CD8-positive, alpha-beta T cell (primary cell): ENCODE measurements at regions of chr14 and their contacts with region 1.

Region 1: GRCh38 chr14:91177073-91178034 is 63.5 kb downstream of the DGLUCY start:
- DNase-seq: peak; percentile 37 to 88 (median 64)
- ATAC-seq: peak; percentile 93
- H3K4me3 ChIP-seq: no peak overlapping the region
- H3K4me3 Mint-ChIP-seq: no peak overlapping the region
- H3K27ac ChIP-seq: peak overlapping the region in 1 of 2 experiments; percentile 52
- H3K27ac Mint-ChIP-seq: peak overlapping the region; percentile 89
- H3K4me1 ChIP-seq: peaks cover 5% of the 10 kb centered on the region
- H3K4me1 Mint-ChIP-seq: peaks cover 12% of the 10 kb centered on the region
- H3K27me3 ChIP-seq: no peaks in the 10 kb centered on the region
- H3K27me3 Mint-ChIP-seq: no peaks in the 10 kb centered on the region
- CTCF ChIP-seq: peak; percentile 89

Region 2: GRCh38 chr14:90985601-90986242 is 191.6 kb before region 1 on chr14:
- CTCF ChIA-PET with region 1: interaction called, 9 read pairs
- POLR2A ChIA-PET with region 1: no interaction called
- intact Hi-C with region 1: loop called in 1 of 2 experiments (anchors 10 kb)
- DNase-seq: no peak
- ATAC-seq: no peak
- H3K4me3 ChIP-seq: no peak overlapping the region
- H3K4me3 Mint-ChIP-seq: no peak overlapping the region
- H3K27ac ChIP-seq: no peak overlapping the region
- H3K27ac Mint-ChIP-seq: no peak overlapping the region
- H3K4me1 ChIP-seq: no peaks in the 10 kb centered on the region
- H3K4me1 Mint-ChIP-seq: peaks cover 3% of the 10 kb centered on the region
- H3K27me3 ChIP-seq: no peaks in the 10 kb centered on the region
- H3K27me3 Mint-ChIP-seq: no peaks in the 10 kb centered on the region
- CTCF ChIP-seq: no peak

Region 3: DNA sequence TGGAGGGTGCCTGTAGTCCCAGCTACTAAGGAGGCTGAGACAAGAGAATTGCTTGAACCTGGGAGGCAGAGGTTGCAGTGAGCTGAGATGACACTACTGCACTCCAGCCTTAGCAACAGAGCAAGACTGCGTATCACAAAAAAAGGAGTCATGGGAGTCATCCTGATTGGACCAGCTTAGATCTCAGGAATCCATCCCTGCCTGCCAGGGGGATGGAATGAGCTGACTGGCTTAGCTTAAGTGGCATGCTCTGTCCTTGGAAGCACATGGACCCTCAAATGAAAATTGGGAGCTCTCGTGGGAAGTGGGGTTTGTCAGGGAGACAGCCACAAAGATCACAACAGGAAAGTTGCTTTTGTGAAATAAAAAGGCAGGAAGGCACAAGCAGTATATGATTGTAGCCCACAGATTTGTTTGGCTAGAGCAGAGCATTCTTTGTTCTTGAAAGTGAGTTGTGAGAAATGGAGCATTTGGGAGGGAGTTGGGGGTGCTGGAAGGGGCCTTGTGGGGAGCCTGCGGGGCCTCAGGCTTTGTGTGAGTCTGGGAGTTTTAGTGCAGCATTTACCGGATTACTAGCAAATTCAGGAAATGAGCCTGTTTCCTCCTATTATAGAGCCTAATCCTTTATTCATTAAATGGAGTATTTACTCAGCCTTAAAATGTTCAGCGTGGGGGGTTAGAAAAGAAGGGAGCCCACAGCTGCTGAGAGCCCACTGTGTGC is 32.8 kb before region 1 on chr14:
- CTCF ChIA-PET with region 1: interaction called, 14 read pairs
- POLR2A ChIA-PET with region 1: no interaction called
- intact Hi-C with region 1: no loop called
- DNase-seq: no peak
- ATAC-seq: no peak
- H3K4me3 ChIP-seq: no peak overlapping the region
- H3K4me3 Mint-ChIP-seq: no peak overlapping the region
- H3K27ac ChIP-seq: no peak overlapping the region
- H3K27ac Mint-ChIP-seq: peak overlapping the region; percentile 53
- H3K4me1 ChIP-seq: peaks cover 17% of the 10 kb centered on the region
- H3K4me1 Mint-ChIP-seq: peaks cover 27% of the 10 kb centered on the region
- H3K27me3 ChIP-seq: no peaks in the 10 kb centered on the region
- H3K27me3 Mint-ChIP-seq: no peaks in the 10 kb centered on the region
- CTCF ChIP-seq: no peak

Region 4: GRCh38 chr14:91228112-91229004 is 51.0 kb after region 1 on chr14:
- CTCF ChIA-PET with region 1: interaction called, 13 read pairs
- POLR2A ChIA-PET with region 1: interaction called, 3 read pairs
- intact Hi-C with region 1: no loop called
- DNase-seq: peak; percentile 36 to 96 (median 75)
- ATAC-seq: peak; percentile 77
- H3K4me3 ChIP-seq: no peak overlapping the region
- H3K4me3 Mint-ChIP-seq: peak overlapping the region; percentile 65
- H3K27ac ChIP-seq: peak overlapping the region; percentile 6 to 85
- H3K27ac Mint-ChIP-seq: peak overlapping the region; percentile 94
- H3K4me1 ChIP-seq: peaks cover 87% of the 10 kb centered on the region
- H3K4me1 Mint-ChIP-seq: peaks cover 89% of the 10 kb centered on the region
- H3K27me3 ChIP-seq: no peaks in the 10 kb centered on the region
- H3K27me3 Mint-ChIP-seq: no peaks in the 10 kb centered on the region
- CTCF ChIP-seq: no peak

Region 5: GRCh38 chr14:91264151-91265150 is 87.1 kb after region 1 on chr14:
- CTCF ChIA-PET with region 1: interaction called, 16 read pairs
- POLR2A ChIA-PET with region 1: no interaction called
- intact Hi-C with region 1: loop called in 1 of 2 experiments (anchors 5 kb)
- DNase-seq: peak in 5 of 9 experiments; percentile 21 to 67 (median 52)
- ATAC-seq: peak; percentile 45
- H3K4me3 ChIP-seq: peak overlapping the region in 1 of 2 experiments; percentile 28
- H3K4me3 Mint-ChIP-seq: peak overlapping the region; percentile 64
- H3K27ac ChIP-seq: no peak overlapping the region
- H3K27ac Mint-ChIP-seq: peak overlapping the region; percentile 32
- H3K4me1 ChIP-seq: peaks cover 19% of the 10 kb centered on the region
- H3K4me1 Mint-ChIP-seq: peaks cover 42% of the 10 kb centered on the region
- H3K27me3 ChIP-seq: no peaks in the 10 kb centered on the region
- H3K27me3 Mint-ChIP-seq: no peaks in the 10 kb centered on the region
- CTCF ChIP-seq: no peak

Region 6: GRCh38 chr14:91292491-91292890 is 115.1 kb after region 1 on chr14:
- CTCF ChIA-PET with region 1: interaction called, 400 read pairs
- POLR2A ChIA-PET with region 1: interaction called, 3 read pairs
- intact Hi-C with region 1: no loop called
- DNase-seq: peak in 1 of 9 experiments; percentile 49
- ATAC-seq: peak; percentile 41
- H3K4me3 ChIP-seq: no peak overlapping the region
- H3K4me3 Mint-ChIP-seq: no peak overlapping the region
- H3K27ac ChIP-seq: peak overlapping the region in 1 of 2 experiments; percentile 5
- H3K27ac Mint-ChIP-seq: peak overlapping the region; percentile 94
- H3K4me1 ChIP-seq: no peaks in the 10 kb centered on the region
- H3K4me1 Mint-ChIP-seq: peaks cover 13% of the 10 kb centered on the region
- H3K27me3 ChIP-seq: no peaks in the 10 kb centered on the region
- H3K27me3 Mint-ChIP-seq: no peaks in the 10 kb centered on the region
- CTCF ChIP-seq: no peak